ENCODE measurements at regions of chr19 and their contacts with region 1.

Region 1: DNA sequence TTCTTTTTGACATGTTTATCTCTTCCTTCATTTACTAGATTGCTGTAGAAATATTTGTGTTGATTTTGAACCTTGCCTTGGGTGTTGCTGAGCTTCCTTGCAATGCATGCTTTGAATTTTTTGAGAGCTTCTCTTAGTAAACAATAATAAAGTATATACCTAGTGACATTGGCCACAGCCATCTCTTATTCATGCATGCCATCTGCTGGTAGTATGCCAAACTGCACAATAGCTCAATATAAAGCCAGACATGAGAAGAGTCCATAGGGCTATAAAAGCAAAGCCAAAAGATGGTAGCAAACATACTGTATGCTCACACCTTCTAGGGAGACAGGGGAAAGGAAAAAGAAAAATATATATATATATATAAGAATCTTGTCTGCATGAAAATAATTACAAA is 18.9 kb upstream of the ZSCAN5A start:
- DNase-seq: peak; percentile 69
- H3K4me3 Mint-ChIP-seq: no peak overlapping the region
- H3K27ac Mint-ChIP-seq: no peak overlapping the region
- H3K4me1 Mint-ChIP-seq: no peaks in the 10 kb centered on the region
- H3K27me3 Mint-ChIP-seq: peaks cover 12% of the 10 kb centered on the region
- CTCF ChIP-seq: peak; percentile 78

Region 2: DNA sequence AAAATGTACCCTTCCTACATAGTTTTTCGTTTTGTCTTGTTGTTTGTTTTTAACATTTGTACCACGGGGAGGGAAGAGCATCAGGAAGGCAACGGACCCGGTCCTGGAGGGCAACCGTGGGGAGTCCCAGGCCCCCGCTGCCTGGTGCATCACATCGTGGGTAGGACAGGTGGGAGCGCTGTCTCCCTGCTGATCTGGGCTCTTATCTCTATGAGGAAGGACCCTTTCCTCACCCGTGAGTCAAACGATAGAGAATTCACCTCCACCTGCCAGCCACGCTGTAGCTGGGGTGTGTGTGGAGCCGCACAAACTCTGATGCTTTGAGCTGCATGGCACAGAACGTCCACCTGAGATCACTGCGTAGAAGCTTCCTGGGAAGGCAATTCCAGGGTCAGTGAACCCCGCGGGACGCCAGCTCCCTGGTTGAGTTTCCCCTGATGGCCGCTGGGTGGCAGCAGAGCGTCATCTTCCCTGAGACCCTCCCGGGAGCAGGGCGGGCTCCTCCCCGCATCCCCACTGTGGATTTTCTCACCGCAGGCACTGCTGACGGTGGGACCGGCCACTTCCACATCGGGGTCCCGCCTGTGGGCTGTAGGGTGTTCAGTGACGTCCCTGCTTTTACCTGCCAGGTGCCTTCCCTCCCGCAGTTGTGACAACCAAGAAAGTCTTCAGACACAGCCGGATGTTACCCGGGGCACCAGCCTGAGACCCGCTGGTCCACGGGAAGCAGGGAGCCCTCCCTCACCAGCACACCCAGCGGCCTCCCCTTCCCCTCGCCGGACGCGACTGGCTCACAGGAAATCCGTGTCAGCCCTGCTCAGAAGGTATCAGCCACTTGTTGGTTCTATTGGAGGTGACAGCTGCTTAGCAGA is 267.1 kb before region 1 on chr19:
- CTCF ChIA-PET with region 1: interaction called, 73 read pairs
- intact Hi-C with region 1: loop called (anchors 1 kb)
- DNase-seq: peak; percentile 81
- H3K4me3 Mint-ChIP-seq: peak overlapping the region; percentile 56
- H3K27ac Mint-ChIP-seq: no peak overlapping the region
- H3K4me1 Mint-ChIP-seq: peaks cover 10% of the 10 kb centered on the region
- H3K27me3 Mint-ChIP-seq: peaks cover 20% of the 10 kb centered on the region
- CTCF ChIP-seq: peak; percentile 97

Region 3: DNA sequence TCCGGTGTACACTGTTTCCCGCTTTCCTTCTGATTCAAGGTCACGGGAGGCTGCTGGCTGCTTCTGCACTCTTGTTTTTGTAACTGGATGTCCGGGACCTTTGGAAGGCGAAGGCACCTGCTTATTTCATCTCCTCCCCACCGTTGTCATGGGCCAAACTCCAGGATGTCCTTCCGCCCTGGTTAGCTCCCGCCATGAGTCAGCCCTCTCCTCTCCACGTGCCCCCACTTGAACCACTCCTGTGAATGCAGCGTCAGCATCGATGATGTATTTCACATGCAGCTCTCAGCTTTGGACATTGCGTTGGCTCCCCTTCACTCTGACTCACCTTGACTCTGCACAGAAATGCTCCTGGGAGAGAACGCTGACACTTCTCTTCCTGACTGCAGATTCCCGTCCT is 163.2 kb before region 1 on chr19:
- CTCF ChIA-PET with region 1: interaction called, 3 read pairs
- intact Hi-C with region 1: loop called (anchors 10 kb)
- DNase-seq: peak; percentile 65
- H3K4me3 Mint-ChIP-seq: peak overlapping the region; percentile 27
- H3K27ac Mint-ChIP-seq: no peak overlapping the region
- H3K4me1 Mint-ChIP-seq: peaks cover 11% of the 10 kb centered on the region
- H3K27me3 Mint-ChIP-seq: peaks cover 25% of the 10 kb centered on the region
- CTCF ChIP-seq: no peak

Region 4: GRCh38 chr19:56252699-56253422 is 80.6 kb before region 1 on chr19:
- CTCF ChIA-PET with region 1: interaction called, 190 read pairs
- intact Hi-C with region 1: loop called (anchors 1 kb)
- DNase-seq: peak; percentile 91
- H3K4me3 Mint-ChIP-seq: no peak overlapping the region
- H3K27ac Mint-ChIP-seq: peak overlapping the region; percentile 39
- H3K4me1 Mint-ChIP-seq: no peaks in the 10 kb centered on the region
- H3K27me3 Mint-ChIP-seq: no peaks in the 10 kb centered on the region
- CTCF ChIP-seq: peak; percentile 88

Region 5: DNA sequence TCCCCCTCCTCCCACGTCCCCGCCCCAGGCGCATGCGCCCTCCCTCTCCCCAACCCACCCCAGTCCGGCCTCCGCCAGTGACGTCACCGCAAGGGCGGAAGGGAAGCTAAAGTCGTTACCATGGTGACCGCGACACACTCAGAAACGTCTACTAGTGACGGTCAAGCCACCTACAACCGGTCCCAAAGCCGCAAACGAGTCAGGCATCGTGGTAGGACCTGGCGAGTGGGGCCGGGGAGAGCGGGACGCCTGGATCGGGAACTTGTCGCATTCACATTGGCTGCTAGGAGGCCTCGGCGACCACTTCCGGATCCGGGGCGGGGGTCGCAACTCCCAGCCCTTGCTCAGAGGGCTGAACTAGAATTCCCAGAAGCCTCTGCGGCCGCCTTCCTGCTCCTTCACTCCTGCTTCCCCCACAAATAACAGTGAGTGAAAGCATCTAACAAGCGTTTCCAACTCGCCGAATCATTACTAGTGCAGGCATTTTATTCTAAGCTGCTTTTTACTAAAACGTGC is 18.9 kb before region 1 on chr19 and contains the start of gene ZSCAN5A:
- CTCF ChIA-PET with region 1: interaction called, 13 read pairs
- intact Hi-C with region 1: no loop called
- DNase-seq: peak; percentile 96
- H3K4me3 Mint-ChIP-seq: peak within 1 kb of the TSS; percentile 95
- H3K27ac Mint-ChIP-seq: peak within 1 kb of the TSS; percentile 99
- H3K4me1 Mint-ChIP-seq: peaks cover 14% of the 10 kb centered on the region
- H3K27me3 Mint-ChIP-seq: no peaks in the 10 kb centered on the region
- CTCF ChIP-seq: no peak
- total RNA-seq, gene ZSCAN5A: 13.5 and 14.9 TPM in 2 replicates

Measured in Calu3 (cell line).